Transverse colon (tissue), 4 donors: ENCODE measurements at regions of chr3 and their contacts with region 1.

Region 1: DNA sequence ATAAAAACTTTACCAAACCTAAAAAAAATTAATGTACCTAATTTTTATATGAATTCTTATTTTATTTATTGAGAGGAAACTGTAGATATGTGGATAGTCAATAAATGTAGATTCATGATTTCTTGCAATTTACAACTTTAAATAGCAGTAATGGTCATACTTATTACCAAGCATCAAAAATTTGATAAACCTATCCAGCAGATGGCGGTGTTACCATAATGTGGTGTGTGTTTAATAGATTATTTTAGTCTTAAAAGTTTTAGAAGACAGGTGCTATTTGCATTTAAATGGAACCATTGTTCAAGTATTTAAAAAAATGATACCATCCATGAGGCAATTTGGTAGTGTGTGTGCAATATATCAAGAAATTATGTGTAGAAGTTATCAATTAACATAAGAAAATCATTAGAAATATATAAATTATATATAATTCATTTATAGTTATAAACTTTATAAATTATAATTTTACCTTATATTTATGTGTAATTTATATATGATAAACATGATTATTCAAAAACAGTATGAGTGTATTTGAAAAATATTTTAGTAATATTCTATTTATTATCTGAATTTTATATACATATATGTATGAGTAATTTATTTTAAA is 176.0 kb upstream of the BCHE start:
- DNase-seq: no peak
- H3K4me3 ChIP-seq: no peak overlapping the region
- H3K27ac ChIP-seq: no peak overlapping the region
- H3K4me1 ChIP-seq: no peaks in the 10 kb centered on the region
- H3K27me3 ChIP-seq: no peaks in the 10 kb centered on the region
- CTCF ChIP-seq: peak in 4 of 5 experiments; percentile 19 to 38 (median 33)
- EP300 ChIP-seq: no peak
- POLR2A ChIP-seq: no peak

Region 2: GRCh38 chr3:165954178-165954577 is 59.0 kb before region 1 on chr3:
- in situ Hi-C with region 1: no loop called
- intact Hi-C with region 1: no loop called
- DNase-seq: no peak
- H3K4me3 ChIP-seq: no peak overlapping the region
- H3K27ac ChIP-seq: no peak overlapping the region
- H3K4me1 ChIP-seq: no peaks in the 10 kb centered on the region
- H3K27me3 ChIP-seq: no peaks in the 10 kb centered on the region
- CTCF ChIP-seq: no peak
- EP300 ChIP-seq: no peak
- POLR2A ChIP-seq: no peak

Region 3: DNA sequence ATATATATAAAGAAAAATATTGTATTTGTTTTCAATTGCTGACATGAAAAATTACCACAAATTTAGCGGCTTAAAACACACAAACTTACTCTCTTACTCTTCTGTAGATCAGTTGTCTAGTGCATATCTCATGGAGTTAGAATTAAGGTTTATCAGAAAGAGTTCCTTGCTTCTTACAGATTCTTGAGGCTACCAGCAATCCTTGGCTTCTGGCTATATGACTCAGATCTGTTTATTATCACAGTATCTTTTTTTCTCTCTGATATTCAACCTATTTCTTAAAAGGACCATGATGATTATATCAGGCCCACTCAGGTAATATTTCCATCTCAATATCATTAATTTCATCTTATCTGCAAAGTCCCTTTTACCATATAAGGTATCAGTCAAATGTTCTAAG is 87.5 kb after region 1 on chr3:
- in situ Hi-C with region 1: no loop called
- intact Hi-C with region 1: no loop called
- DNase-seq: no peak
- H3K4me3 ChIP-seq: no peak overlapping the region
- H3K27ac ChIP-seq: no peak overlapping the region
- H3K4me1 ChIP-seq: no peaks in the 10 kb centered on the region
- H3K27me3 ChIP-seq: no peaks in the 10 kb centered on the region
- CTCF ChIP-seq: no peak
- EP300 ChIP-seq: no peak
- POLR2A ChIP-seq: no peak

Region 4: GRCh38 chr3:167032261-167032876 is 1019.2 kb after region 1 on chr3:
- in situ Hi-C with region 1: loop called in 1 of 4 experiments (anchors 25 kb)
- intact Hi-C with region 1: no loop called
- DNase-seq: no peak
- H3K4me3 ChIP-seq: no peak overlapping the region
- H3K27ac ChIP-seq: no peak overlapping the region
- H3K4me1 ChIP-seq: no peaks in the 10 kb centered on the region
- H3K27me3 ChIP-seq: no peaks in the 10 kb centered on the region
- CTCF ChIP-seq: peak in 3 of 5 experiments; percentile 20 to 27 (median 23)
- EP300 ChIP-seq: no peak
- POLR2A ChIP-seq: no peak